CD14-positive monocyte (primary cell): ENCODE measurements at regions of chr6 and their contacts with region 1.

Region 1: DNA sequence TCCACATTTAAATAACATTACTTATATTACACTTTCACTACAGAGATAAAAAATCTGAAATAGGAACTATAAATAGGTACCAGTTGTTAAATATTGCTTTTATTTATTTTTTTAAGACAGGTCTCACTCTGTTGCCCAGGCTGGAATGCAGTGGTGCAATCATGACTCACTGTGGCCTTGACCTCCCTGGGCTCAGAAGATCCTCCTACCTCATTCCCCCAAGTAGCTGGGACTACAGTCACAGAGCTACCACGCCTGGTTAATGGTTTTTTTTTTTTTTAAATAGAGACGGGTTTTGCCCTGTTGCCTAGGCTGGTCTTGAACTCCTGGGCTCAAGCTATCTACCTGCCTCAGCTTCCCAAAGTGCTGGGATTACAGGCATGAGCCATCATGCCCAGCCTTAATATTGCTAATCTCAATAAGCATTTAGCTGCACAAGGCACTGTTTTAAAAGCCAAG is 17.3 kb downstream of the EEF1E1 start:
- DNase-seq: peak; percentile 78 to 91 (median 84)
- H3K4me3 ChIP-seq: no peak overlapping the region
- H3K4me3 Mint-ChIP-seq: no peak overlapping the region
- H3K27ac ChIP-seq: peak overlapping the region; percentile 48 to 80
- H3K27ac Mint-ChIP-seq: peak overlapping the region; percentile 74 to 91 (median 87)
- H3K4me1 ChIP-seq: peaks cover 36 to 55% of the 10 kb centered on the region in 2 donors
- H3K4me1 Mint-ChIP-seq: peaks cover 40% of the 10 kb centered on the region
- H3K27me3 ChIP-seq: no peaks in the 10 kb centered on the region
- H3K27me3 Mint-ChIP-seq: no peaks in the 10 kb centered on the region
- CTCF ChIP-seq: no peak

Region 2: DNA sequence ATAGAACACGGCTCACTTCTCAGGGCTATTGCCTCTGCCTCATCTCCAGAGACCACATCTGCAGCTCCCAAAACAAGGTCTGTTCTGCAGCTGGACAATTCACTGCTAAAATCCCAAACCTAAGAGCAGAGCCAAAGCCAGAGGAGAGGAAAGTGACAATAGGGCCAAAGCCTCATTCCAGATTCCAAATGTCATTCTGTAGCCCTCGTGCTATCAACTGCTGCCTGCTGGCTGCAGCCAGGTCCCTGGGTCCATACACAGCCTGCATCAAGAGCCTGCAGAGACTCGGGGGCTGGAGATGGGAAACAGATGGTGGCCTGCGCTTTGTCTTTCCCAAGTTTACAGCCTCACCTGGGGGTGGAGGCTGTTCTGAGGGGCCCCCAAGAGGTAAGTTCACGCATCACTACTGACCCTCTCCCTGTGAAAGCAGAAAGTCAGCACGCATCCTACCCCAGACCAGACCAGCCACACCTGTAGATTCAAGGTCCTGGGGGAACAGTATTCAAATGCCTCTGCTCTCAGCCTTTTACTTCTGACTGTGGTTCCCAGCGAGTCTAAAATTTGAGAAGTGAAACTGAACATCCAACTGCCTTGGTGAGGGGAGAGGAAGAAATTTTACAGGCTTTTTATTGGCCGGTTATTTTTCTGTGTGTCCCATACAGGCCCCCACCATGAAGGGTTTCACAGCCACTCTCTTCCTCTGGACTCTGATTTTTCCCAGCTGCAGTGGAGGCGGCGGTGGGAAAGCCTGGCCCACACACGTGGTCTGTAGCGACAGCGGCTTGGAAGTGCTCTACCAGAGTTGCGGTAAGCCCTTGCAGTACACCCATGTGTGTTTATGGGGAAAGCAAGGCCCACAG is 1496.8 kb before region 1 on chr6 and contains the start of gene LY86:
- intact Hi-C with region 1: loop called in 1 of 2 experiments (anchors 10 kb)
- DNase-seq: peak; percentile 40 to 69 (median 69)
- H3K4me3 ChIP-seq: peak within 1 kb of the TSS; percentile 65 to 85 (median 81)
- H3K4me3 Mint-ChIP-seq: peak within 1 kb of the TSS; percentile 87 to 96
- H3K27ac ChIP-seq: peak within 1 kb of the TSS; percentile 81 to 98
- H3K27ac Mint-ChIP-seq: peak within 1 kb of the TSS; percentile 92 to 99 (median 96)
- H3K4me1 ChIP-seq: peaks cover 64 to 70% of the 10 kb centered on the region in 2 donors
- H3K4me1 Mint-ChIP-seq: peaks cover 76% of the 10 kb centered on the region
- H3K27me3 ChIP-seq: no peaks in the 10 kb centered on the region
- H3K27me3 Mint-ChIP-seq: no peaks in the 10 kb centered on the region
- CTCF ChIP-seq: no peak
- polyA plus RNA-seq, gene LY86: 166 to 609 (median 454) TPM

Region 3: DNA sequence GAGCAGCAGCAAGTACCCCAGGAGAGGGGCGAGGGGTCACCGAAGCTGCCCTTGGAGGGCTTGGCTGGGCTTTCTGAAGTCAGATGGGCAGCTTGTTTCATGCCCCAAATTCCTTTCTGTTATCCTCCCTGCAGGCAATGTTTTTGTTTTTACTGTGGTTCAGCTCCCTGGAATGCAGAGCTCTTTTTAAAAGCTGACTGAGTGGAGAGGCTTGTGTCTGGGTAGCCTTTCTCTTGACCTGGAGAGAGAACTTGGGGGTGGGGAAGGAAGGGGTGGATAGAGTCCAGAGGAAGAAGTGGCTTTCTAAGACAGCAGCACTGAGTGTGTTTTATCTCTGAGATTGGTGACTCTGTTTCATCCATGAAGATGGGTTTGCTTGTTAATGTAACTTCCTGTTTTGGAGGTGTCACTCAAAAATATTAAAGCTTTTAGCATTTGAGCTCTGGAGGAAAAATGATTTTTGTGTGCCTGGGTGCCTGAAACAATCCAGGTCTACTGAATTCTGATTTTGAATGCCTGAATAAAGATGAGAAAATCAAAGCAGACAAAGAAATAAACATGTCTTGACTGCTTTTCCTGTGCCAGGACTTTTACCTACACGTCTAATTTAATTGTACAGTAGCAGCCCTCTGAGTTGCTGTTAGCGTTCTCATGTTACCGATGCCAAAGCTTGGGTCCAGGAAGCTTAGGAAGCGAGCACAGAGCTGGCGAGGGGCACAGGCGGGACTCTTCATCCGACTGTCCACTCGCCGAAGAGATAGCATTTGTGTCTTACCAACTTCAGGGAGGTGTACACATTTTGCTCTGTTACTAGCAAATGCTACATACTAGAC is 95.5 kb after region 1 on chr6:
- intact Hi-C with region 1: no loop called
- DNase-seq: no peak
- H3K4me3 ChIP-seq: no peak overlapping the region
- H3K4me3 Mint-ChIP-seq: no peak overlapping the region
- H3K27ac ChIP-seq: no peak overlapping the region
- H3K27ac Mint-ChIP-seq: no peak overlapping the region
- H3K4me1 ChIP-seq: peaks cover 5 to 23% of the 10 kb centered on the region in 2 donors
- H3K4me1 Mint-ChIP-seq: peaks cover 21% of the 10 kb centered on the region
- H3K27me3 ChIP-seq: no peaks in the 10 kb centered on the region
- H3K27me3 Mint-ChIP-seq: peaks cover 3 to 6% (median 4%) of the 10 kb centered on the region in 3 donors
- CTCF ChIP-seq: no peak

Region 4: GRCh38 chr6:8243475-8243874 is 158.4 kb after region 1 on chr6:
- intact Hi-C with region 1: no loop called
- DNase-seq: no peak
- H3K4me3 ChIP-seq: no peak overlapping the region
- H3K4me3 Mint-ChIP-seq: no peak overlapping the region
- H3K27ac ChIP-seq: no peak overlapping the region
- H3K27ac Mint-ChIP-seq: no peak overlapping the region
- H3K4me1 ChIP-seq: no peaks in the 10 kb centered on the region
- H3K4me1 Mint-ChIP-seq: no peaks in the 10 kb centered on the region
- H3K27me3 ChIP-seq: peaks cover 0 to 4% of the 10 kb centered on the region in 2 donors
- H3K27me3 Mint-ChIP-seq: peaks cover 9 to 14% (median 12%) of the 10 kb centered on the region in 3 donors
- CTCF ChIP-seq: no peak